Panc1 (cell line): ENCODE measurements at regions of chr7 and their contacts with region 1.

Region 1: GRCh38 chr7:99374103-99375064 is at the start of gene ARPC1B:
- DNase-seq: no peak
- ATAC-seq: peak; percentile 87
- H3K4me3 ChIP-seq: peak within 1 kb of the TSS; percentile 63 to 81
- H3K27ac ChIP-seq: peak within 1 kb of the TSS; percentile 77
- H3K4me1 ChIP-seq: peaks cover 33% of the 10 kb centered on the region
- H3K27me3 ChIP-seq: no peaks in the 10 kb centered on the region
- CTCF ChIP-seq: no peak
- total RNA-seq, gene ARPC1B: 266 TPM

Region 2: DNA sequence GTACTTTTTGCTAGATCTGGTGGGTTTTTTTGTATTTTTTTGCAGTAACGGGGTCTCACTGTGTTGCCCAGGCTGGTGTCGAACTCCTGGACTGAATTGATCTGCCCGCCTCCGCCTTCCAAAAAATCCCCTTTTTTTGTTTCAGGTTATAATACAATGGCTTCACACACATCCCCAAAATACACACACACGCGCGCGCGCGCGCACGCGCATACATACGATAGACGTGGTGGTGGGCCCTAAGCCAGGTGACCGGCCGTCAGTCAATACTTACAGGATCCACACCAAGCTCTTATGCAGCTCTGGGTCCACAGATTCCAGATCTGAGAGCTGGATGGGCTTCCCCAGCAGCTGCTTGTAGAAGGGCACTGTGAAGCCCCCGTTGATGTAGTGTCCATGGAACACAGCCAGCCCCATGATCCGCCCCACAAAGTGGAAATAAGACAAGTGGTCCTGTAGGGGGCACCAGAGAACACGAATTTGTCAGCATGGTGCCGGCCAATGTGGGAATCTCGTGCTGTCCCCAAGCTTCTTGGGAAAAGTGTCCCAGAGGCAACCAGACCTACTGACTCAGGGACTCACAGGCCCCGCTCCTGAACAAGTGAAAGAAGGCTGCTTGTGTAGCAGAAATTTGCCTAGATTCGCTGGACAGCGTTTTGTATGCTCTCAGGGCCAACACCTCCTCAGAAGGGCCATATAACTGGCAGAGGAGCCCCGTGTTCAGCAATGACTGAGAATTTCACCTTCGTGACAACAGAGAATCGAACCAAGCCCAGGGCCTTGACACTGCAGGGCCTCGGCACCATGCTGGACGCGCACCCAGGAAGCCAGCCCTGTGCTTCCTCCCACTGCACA is 334.1 kb before region 1 on chr7:
- CTCF ChIA-PET with region 1: interaction called, 12 read pairs
- POLR2A ChIA-PET with region 1: no interaction called
- in situ Hi-C with region 1: no loop called
- intact Hi-C with region 1: no loop called
- DNase-seq: peak; percentile 78
- ATAC-seq: peak; percentile 84
- H3K4me3 ChIP-seq: no peak overlapping the region
- H3K27ac ChIP-seq: peak overlapping the region; percentile 72
- H3K4me1 ChIP-seq: peaks cover 24% of the 10 kb centered on the region
- H3K27me3 ChIP-seq: no peaks in the 10 kb centered on the region
- CTCF ChIP-seq: peak; percentile 86

Region 3: DNA sequence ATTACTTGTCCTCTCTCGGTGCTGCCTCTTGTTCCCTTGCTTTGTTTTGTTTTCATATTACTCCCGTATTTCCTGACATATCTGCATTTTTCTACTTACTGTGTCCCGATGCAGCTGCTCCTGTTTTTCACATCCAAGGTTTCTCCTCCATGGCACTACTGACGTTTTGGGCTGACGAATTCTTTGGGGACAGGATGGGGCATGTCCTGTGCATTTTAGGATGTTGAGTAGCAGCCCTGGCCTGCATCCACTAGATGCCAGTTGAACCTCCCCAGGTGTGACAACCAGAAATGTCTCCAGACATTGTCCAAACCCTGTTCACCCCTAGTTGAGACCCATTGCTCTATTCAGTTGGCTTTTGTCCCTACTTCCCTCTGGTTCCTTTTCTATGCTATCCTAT is 110.7 kb after region 1 on chr7:
- CTCF ChIA-PET with region 1: no interaction called
- POLR2A ChIA-PET with region 1: no interaction called
- in situ Hi-C with region 1: no loop called
- intact Hi-C with region 1: no loop called
- DNase-seq: no peak
- ATAC-seq: no peak
- H3K4me3 ChIP-seq: no peak overlapping the region
- H3K27ac ChIP-seq: no peak overlapping the region
- H3K4me1 ChIP-seq: no peaks in the 10 kb centered on the region
- H3K27me3 ChIP-seq: no peaks in the 10 kb centered on the region
- CTCF ChIP-seq: no peak